ENCODE measurements at regions of chr4 and their contacts with region 1.

Region 1: GRCh38 chr4:109433205-109434006 is at the start of gene SEC24B:
- DNase-seq: peak; percentile 92
- H3K4me3 Mint-ChIP-seq: peak within 1 kb of the TSS; percentile 82
- H3K27ac Mint-ChIP-seq: peak within 1 kb of the TSS; percentile 85
- H3K4me1 Mint-ChIP-seq: peaks cover 62% of the 10 kb centered on the region
- H3K27me3 Mint-ChIP-seq: no peaks in the 10 kb centered on the region
- total RNA-seq, gene SEC24B: 20.6 to 21.1 TPM

Region 2: GRCh38 chr4:108141213-108141950 is 1292.0 kb before region 1 on chr4:
- CTCF ChIA-PET with region 1: no interaction called
- intact Hi-C with region 1: loop called (anchors 10 kb)
- DNase-seq: peak; percentile 72
- H3K4me3 Mint-ChIP-seq: peak overlapping the region; percentile 77
- H3K27ac Mint-ChIP-seq: peak overlapping the region; percentile 99
- H3K4me1 Mint-ChIP-seq: peaks cover 89% of the 10 kb centered on the region
- H3K27me3 Mint-ChIP-seq: no peaks in the 10 kb centered on the region

Region 3: GRCh38 chr4:109355835-109356234 is 77.6 kb before region 1 on chr4:
- CTCF ChIA-PET with region 1: no interaction called
- intact Hi-C with region 1: no loop called
- DNase-seq: no peak
- H3K4me3 Mint-ChIP-seq: no peak overlapping the region
- H3K27ac Mint-ChIP-seq: no peak overlapping the region
- H3K4me1 Mint-ChIP-seq: peaks cover 23% of the 10 kb centered on the region
- H3K27me3 Mint-ChIP-seq: peaks cover 11% of the 10 kb centered on the region

Region 4: DNA sequence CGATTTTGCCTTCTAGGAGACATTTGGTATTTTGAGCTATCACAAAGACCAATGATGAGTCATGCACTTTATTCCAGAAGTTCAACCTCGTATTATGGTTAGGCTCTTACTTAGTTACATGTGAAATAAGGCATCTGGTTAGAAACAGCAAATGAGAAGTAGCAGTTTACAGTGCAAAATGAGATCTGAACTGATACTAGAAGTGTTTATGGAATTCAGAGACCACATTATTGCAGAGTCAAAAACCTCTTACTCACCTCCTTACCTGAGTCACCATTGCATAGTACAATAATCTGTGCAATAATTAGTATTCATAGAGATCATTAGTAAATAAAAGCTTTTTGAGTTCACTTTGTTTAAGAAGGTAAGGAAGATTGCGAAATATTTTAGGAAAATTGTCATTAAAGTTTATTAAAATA is 38.9 kb after region 1 on chr4:
- CTCF ChIA-PET with region 1: no interaction called
- intact Hi-C with region 1: loop called (anchors 2 kb)
- DNase-seq: no peak
- H3K4me3 Mint-ChIP-seq: no peak overlapping the region
- H3K27ac Mint-ChIP-seq: no peak overlapping the region
- H3K4me1 Mint-ChIP-seq: peaks cover 53% of the 10 kb centered on the region
- H3K27me3 Mint-ChIP-seq: no peaks in the 10 kb centered on the region

Region 5: GRCh38 chr4:109658871-109659410 is 225.5 kb after region 1 on chr4:
- CTCF ChIA-PET with region 1: interaction called, 12 read pairs
- intact Hi-C with region 1: loop called (anchors 1 kb)
- DNase-seq: peak; percentile 63
- H3K4me3 Mint-ChIP-seq: no peak overlapping the region
- H3K27ac Mint-ChIP-seq: no peak overlapping the region
- H3K4me1 Mint-ChIP-seq: peaks cover 46% of the 10 kb centered on the region
- H3K27me3 Mint-ChIP-seq: no peaks in the 10 kb centered on the region

Region 6: GRCh38 chr4:109729718-109730618 is 296.6 kb after region 1 on chr4 and contains the start of gene PLA2G12A:
- CTCF ChIA-PET with region 1: no interaction called
- intact Hi-C with region 1: loop called (anchors 1 kb)
- DNase-seq: peak; percentile 66
- H3K4me3 Mint-ChIP-seq: peak within 1 kb of the TSS; percentile 87
- H3K27ac Mint-ChIP-seq: peak within 1 kb of the TSS; percentile 39
- H3K4me1 Mint-ChIP-seq: peaks cover 15% of the 10 kb centered on the region
- H3K27me3 Mint-ChIP-seq: no peaks in the 10 kb centered on the region
- total RNA-seq, gene PLA2G12A: 22.8 to 24.3 TPM

Region 7: DNA sequence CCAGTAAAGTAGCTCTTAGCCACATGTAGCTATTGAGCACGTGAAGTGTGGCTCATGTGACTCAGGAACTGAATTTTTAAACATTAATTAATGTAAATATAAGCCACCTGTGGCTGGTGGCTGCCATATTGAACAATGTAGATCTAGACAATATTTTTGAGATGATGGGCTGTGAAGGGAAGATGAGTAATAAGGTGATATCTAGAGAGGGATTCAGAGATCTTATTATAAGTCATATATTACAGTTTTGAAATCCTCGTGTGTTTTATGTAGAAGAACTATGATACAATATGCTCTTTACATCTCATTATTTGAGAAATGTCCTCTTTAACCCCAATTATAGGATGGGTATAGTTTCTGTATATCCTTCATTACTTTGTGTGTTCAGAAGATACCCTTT is 387.8 kb after region 1 on chr4:
- CTCF ChIA-PET with region 1: interaction called, 3 read pairs
- intact Hi-C with region 1: loop called (anchors 1 kb)
- DNase-seq: peak; percentile 13
- H3K4me3 Mint-ChIP-seq: no peak overlapping the region
- H3K27ac Mint-ChIP-seq: no peak overlapping the region
- H3K4me1 Mint-ChIP-seq: peaks cover 57% of the 10 kb centered on the region
- H3K27me3 Mint-ChIP-seq: no peaks in the 10 kb centered on the region

Region 8: GRCh38 chr4:110296892-110297291 is 863.5 kb after region 1 on chr4:
- CTCF ChIA-PET with region 1: no interaction called
- intact Hi-C with region 1: loop called (anchors 2 kb)
- DNase-seq: no peak
- H3K4me3 Mint-ChIP-seq: no peak overlapping the region
- H3K27ac Mint-ChIP-seq: no peak overlapping the region
- H3K4me1 Mint-ChIP-seq: peaks cover 13% of the 10 kb centered on the region
- H3K27me3 Mint-ChIP-seq: peaks cover 56% of the 10 kb centered on the region

Measured in activated naive CD4-positive, alpha-beta T cell treated with anti-CD3 and anti-CD28 coated beads for 36 hours (primary cell).